Activated CD8-positive, alpha-beta T cell treated with anti-CD3 and anti-CD28 coated beads, Interleukin-2, amount 10 ng/mL, durations not matched to agents 7 days and 5 days (primary cell): ENCODE measurements at regions of chr13 and their contacts with region 1.

Region 1: DNA sequence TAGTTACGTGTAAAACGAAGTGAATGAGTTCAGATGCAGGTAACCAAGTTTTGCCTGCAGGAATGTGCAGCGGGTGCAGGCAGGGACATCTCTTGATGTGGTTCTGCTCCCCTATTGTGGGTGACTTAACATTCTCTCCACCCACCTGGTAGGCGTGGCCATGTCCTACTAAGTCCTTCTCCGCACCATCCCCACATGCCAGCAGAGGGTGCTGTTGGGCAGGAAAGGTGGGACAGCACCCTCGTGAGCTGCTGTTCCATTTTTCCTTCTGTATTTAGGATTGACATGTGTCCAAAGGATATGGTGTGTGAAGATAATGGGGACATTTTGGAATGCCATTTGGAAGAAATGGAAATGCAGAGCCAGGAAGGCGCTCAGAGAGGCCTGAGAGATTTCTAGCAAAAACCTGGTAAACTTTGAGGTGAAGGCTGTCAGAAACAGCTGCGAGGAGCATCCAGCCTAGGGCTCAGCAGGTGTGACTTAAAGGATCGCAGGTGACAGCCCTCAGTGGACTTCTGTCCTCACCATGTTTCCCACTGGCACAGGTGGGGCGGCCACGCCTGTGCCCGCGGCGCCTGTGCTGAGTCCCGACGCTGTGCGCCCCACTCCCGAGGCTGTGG is 26.2 kb upstream of the MCF2L start:
- DNase-seq: peak; percentile 96
- ATAC-seq: peak; percentile 93
- H3K4me3 Mint-ChIP-seq: peak overlapping the region; percentile 77
- H3K27ac Mint-ChIP-seq: no peak overlapping the region
- H3K4me1 Mint-ChIP-seq: peaks cover 7% of the 10 kb centered on the region
- H3K27me3 Mint-ChIP-seq: peaks cover 23% of the 10 kb centered on the region

Region 2: DNA sequence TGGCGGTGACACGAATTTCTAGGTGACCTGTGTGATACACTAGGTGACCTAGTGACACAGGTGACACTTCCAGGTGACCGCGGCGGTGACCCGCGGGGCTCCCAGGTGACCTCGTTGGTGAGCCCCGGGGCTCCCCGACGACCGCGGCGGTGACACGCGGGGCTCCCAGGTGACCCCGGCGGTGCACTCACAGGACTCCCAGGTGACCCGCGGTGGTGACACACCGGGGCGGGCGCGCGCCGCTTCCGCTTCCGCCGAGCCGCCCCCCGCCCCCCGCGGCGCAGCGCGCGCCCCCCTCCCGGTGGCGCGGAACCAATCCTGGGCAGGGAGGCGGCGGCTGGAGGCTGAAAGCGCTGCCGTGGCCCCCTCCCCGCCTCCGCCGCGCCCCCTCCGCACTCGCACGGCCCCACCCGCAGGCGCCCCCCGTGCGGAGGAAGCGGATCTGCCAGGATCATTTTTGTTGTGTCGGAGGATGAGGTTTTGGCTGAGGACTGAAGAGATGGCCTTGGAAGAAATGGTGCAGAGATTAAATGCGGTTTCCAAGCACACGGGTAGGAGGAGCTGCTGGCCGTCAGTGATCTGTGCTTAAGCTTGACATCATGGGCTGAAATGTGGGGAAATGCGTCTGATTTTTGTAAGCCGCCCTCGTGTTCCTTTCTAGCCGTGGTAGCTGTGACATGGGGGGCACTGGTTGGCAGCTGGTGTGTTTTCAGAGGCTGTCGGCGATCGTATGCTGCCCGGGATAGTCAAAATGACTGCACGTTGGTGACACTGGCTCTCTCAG is 26.3 kb after region 1 on chr13 and contains the start of gene MCF2L:
- CTCF ChIA-PET with region 1: interaction called, 15 read pairs
- POLR2A ChIA-PET with region 1: no interaction called
- DNase-seq: peak; percentile 62
- ATAC-seq: peak; percentile 71
- H3K4me3 Mint-ChIP-seq: peak within 1 kb of the TSS; percentile 80
- H3K27ac Mint-ChIP-seq: peak within 1 kb of the TSS; percentile 63
- H3K4me1 Mint-ChIP-seq: peaks cover 9% of the 10 kb centered on the region
- H3K27me3 Mint-ChIP-seq: peaks cover 29% of the 10 kb centered on the region
- total RNA-seq, gene MCF2L: 0.76 to 1.0 TPM

Region 3: DNA sequence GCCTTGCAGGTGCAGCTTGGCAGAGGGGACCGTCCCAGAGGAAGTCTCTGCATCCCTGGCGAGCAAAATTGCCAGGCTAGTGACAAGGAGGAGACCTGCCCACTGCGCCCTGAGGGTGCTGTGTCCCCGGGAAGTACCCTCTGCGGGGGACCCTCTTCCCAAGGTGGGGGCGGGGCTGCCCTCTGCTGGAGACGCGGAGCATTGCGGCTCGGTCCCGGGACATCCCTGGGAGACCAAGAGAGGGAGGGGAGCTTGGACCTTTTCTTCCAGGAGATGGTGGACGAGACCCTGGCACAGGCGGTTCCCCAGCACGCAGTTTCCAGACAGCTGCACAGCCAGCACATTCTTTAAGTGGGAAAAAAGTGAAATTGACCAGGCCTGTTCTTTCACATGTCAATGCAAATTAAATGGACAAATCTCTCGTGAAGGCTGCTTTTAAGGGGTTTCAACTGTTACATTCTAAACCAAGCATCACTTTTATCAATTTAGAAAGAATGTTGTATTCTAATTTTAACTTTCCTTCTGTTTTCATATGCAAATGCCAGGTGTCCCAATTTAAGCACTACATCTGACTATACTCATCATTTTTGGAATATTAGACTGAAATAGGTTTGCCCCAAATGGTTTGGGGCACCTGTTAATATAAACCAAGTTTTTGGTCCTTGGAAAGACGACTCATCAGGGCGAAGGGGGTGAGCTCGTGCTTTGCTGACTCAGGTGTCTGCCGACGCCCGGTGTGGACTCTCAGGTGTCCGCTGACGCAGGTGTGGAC is 86.9 kb after region 1 on chr13:
- CTCF ChIA-PET with region 1: interaction called, 19 read pairs
- POLR2A ChIA-PET with region 1: interaction called, 3 read pairs
- DNase-seq: peak; percentile 51
- ATAC-seq: no peak
- H3K4me3 Mint-ChIP-seq: no peak overlapping the region
- H3K27ac Mint-ChIP-seq: no peak overlapping the region
- H3K4me1 Mint-ChIP-seq: no peaks in the 10 kb centered on the region
- H3K27me3 Mint-ChIP-seq: no peaks in the 10 kb centered on the region

Region 4: GRCh38 chr13:113318956-113319355 is 376.2 kb after region 1 on chr13:
- CTCF ChIA-PET with region 1: no interaction called
- POLR2A ChIA-PET with region 1: no interaction called
- DNase-seq: no peak
- ATAC-seq: no peak
- H3K4me3 Mint-ChIP-seq: no peak overlapping the region
- H3K27ac Mint-ChIP-seq: no peak overlapping the region
- H3K4me1 Mint-ChIP-seq: peaks cover 3% of the 10 kb centered on the region
- H3K27me3 Mint-ChIP-seq: no peaks in the 10 kb centered on the region